HepG2 (cell line): ENCODE measurements at regions of chr3 and their contacts with region 1.

Region 1: DNA sequence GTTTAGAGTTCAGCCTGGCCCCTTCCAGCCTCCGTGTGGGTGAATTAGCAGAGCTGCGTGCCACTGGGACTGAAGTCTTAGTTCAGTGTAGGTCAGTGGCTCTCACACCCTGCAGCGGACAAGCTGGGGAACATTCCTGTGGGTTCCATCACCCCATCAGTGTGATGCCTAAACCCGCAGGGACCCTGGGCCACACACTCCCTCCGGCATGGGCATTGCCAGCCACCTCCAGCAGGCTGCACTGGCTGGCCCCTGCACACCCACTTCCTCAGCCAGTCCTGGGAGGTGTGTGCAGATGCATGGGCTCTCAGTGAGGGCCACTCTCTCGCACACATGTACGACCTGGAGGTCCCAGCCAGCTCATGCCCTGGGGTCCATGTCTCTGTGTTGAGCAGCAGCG is 32.1 kb upstream of the TOPBP1 start:
- DNase-seq: no peak
- ATAC-seq: peak; percentile 72
- H3K4me3 ChIP-seq: no peak overlapping the region
- H3K27ac ChIP-seq: no peak overlapping the region
- H3K4me1 ChIP-seq: peaks cover 50% of the 10 kb centered on the region
- H3K27me3 ChIP-seq: no peaks in the 10 kb centered on the region
- CTCF ChIP-seq: no peak
- EP300 ChIP-seq: no peak
- POLR2A ChIP-seq: no peak
- RAD21 ChIP-seq: no peak

Region 2: DNA sequence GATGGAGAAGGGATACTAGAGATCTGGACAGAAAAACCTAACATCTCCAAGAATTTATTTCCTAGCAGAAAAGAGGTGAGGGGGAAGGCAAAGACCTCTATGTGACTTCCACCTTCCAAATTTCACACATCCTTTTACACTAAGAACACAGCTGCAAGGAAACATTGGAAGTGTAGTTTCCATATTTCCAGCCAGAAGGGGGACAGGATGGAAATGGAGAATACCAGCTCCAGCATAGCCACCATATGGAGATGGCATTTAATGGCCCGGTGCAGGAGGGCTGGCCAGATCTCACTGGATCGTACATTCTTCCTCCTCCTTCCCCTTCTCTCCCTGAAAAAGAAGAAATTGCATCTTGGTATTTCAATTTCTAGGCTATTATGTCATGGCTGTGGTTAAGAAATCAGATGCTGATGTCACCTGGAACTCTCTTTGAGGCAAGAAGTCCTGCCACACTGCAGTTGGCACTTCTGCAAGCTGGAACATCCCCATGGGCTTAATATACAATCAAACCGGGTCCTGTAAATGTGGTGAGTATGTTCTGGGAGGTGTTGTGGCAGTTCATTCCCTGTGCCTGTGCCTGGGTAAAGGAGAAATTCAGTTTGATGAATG is 15.4 kb after region 1 on chr3:
- CTCF ChIA-PET with region 1: no interaction called
- POLR2A ChIA-PET with region 1: interaction called, 11 read pairs
- in situ Hi-C with region 1: no loop called
- intact Hi-C with region 1: no loop called
- DNase-seq: no peak
- ATAC-seq: peak; percentile 73
- H3K4me3 ChIP-seq: no peak overlapping the region
- H3K27ac ChIP-seq: no peak overlapping the region
- H3K4me1 ChIP-seq: peaks cover 37% of the 10 kb centered on the region
- H3K27me3 ChIP-seq: peaks cover 1 to 3% of the 10 kb centered on the region in 2 experiments; a peak in 1 of 5 replicates
- CTCF ChIP-seq: no peak
- EP300 ChIP-seq: no peak
- POLR2A ChIP-seq: no peak
- RAD21 ChIP-seq: 0 out of 2 replicates have a peak, but pooled peaks have one; percentile 36